Activated CD4-positive, alpha-beta memory T cell treated with anti-CD3 and anti-CD28 coated beads, Interleukin-2, amount 10 ng/mL, durations not matched to agents 7 days and 5 days (primary cell): ENCODE measurements at regions of chr9 and their contacts with region 1.

Region 1: DNA sequence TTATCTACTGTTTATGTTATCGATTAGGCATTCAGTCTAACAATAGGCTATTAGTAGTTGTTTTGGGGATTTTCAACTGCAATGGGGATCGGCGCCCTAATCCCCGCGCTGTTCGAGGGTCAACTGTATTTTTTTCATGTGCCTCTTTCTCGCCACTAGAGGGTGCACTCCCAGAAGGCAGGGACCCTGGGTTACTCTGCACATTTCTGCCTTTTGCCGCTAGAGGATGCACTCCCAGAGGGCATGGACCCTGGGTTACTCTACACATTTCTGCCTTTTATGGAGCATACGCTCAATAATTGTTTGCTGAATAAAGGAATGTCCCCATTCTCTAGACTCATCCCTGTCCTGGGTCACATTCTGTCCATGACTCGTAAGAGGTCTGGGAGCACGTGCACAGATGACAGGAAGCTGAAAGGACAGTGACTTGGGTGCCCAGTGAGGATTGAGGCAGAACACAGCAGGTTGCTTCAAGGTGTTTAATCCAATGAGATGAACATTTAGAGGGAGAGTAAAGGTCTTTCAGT is 27.9 kb upstream of the RECK start:
- DNase-seq: peak; percentile 70
- H3K4me3 Mint-ChIP-seq: no peak overlapping the region
- H3K27ac Mint-ChIP-seq: no peak overlapping the region
- H3K4me1 Mint-ChIP-seq: peaks cover 20% of the 10 kb centered on the region
- H3K27me3 Mint-ChIP-seq: peaks cover 46% of the 10 kb centered on the region

Region 2: DNA sequence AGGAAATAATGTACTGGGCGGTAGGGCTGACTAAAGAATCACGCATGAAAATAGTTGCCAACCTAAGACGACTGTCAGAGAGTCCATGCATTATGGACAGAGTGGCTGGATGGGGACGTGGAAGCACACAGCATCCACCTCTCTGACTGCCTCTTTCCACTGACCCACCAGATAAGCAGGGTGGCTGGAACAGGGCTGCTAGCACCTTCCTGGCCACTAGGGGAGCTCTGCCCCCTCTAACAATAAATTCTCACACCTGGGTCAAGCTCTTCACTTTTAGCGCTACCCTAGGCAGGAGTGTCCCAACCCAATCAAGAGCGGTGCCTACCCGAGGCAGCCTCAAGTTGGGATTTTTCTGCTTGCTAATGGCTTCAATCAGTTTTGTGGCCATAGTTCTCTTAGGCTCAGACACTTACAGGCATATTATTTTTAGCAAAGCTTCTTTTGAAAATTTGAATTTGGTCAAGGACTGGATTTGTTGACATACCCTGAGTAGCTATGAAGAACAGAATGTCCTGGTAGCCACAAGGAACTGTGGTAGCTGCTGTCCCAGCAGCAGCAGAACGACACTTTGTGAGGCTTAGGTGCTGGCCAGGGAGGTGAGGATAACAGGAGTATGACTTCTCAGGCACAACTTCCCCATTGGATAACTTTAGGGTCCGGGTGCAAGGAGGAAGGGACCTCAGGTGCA is 312.2 kb before region 1 on chr9:
- CTCF ChIA-PET with region 1: no interaction called
- POLR2A ChIA-PET with region 1: no interaction called
- DNase-seq: peak; percentile 60
- H3K4me3 Mint-ChIP-seq: no peak overlapping the region
- H3K27ac Mint-ChIP-seq: no peak overlapping the region
- H3K4me1 Mint-ChIP-seq: peaks cover 4% of the 10 kb centered on the region
- H3K27me3 Mint-ChIP-seq: no peaks in the 10 kb centered on the region

Region 3: DNA sequence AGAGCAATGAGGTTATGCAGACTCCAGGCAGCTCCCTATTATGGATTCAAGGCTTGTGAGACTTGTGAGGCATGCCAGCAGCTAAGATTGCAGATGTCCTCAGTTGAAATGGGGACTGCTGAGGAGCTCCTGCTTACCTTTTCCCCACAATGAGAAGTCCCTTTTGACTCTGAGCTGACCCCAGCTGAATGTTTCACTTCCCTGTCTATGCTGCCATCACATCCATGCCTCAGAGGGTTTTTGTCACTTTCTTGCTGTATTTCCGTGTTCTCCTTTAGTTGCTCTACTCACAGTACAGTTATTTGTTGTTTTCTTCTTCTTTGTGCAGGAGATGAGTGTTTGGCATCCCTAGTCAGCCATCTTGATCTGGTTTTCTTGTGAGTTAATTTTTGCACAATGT is 32.1 kb before region 1 on chr9:
- CTCF ChIA-PET with region 1: no interaction called
- POLR2A ChIA-PET with region 1: no interaction called
- DNase-seq: no peak
- H3K4me3 Mint-ChIP-seq: no peak overlapping the region
- H3K27ac Mint-ChIP-seq: no peak overlapping the region
- H3K4me1 Mint-ChIP-seq: peaks cover 4% of the 10 kb centered on the region
- H3K27me3 Mint-ChIP-seq: peaks cover 81% of the 10 kb centered on the region

Region 4: GRCh38 chr9:35996358-35996975 is 12.4 kb before region 1 on chr9:
- CTCF ChIA-PET with region 1: interaction called, 15 read pairs
- POLR2A ChIA-PET with region 1: no interaction called
- DNase-seq: no peak
- H3K4me3 Mint-ChIP-seq: no peak overlapping the region
- H3K27ac Mint-ChIP-seq: no peak overlapping the region
- H3K4me1 Mint-ChIP-seq: no peaks in the 10 kb centered on the region
- H3K27me3 Mint-ChIP-seq: peaks cover 38% of the 10 kb centered on the region

Region 5: DNA sequence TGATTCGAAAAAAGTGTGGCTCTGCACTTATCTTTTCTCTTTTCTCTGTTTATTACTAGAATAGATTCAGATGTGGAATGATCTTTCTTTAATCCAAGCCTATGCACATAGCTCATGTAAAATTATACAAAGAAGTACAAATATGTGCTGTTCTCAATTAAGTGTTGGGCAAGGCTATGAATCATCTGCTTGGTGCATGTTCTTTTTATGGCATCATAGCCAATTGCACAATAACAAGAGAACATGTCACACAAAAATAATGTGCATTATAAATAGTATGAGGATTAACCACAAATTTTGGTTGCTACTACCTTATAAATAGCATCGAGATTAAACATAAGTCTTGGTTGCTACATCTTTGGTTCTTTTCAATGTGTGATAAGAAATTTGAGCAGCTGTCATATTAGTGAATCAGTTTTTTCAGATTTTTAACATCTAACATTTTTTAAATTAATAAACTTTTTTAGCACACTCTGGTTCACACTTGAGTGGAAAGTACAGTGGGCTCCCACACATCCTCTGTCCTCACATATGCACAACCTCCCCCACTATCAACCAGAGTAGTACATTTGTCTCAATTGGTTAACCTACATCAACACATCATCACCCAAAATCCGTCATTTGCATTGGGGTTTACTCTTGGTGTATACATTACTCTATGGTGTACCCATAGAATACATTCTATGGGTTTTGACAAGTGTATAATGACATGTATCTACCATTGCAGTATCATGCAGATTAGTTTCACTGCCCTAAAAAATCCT is 21.1 kb after region 1 on chr9:
- CTCF ChIA-PET with region 1: interaction called, 94 read pairs
- POLR2A ChIA-PET with region 1: no interaction called
- DNase-seq: no peak
- H3K4me3 Mint-ChIP-seq: no peak overlapping the region
- H3K27ac Mint-ChIP-seq: no peak overlapping the region
- H3K4me1 Mint-ChIP-seq: no peaks in the 10 kb centered on the region
- H3K27me3 Mint-ChIP-seq: peaks cover 34% of the 10 kb centered on the region

Region 6: DNA sequence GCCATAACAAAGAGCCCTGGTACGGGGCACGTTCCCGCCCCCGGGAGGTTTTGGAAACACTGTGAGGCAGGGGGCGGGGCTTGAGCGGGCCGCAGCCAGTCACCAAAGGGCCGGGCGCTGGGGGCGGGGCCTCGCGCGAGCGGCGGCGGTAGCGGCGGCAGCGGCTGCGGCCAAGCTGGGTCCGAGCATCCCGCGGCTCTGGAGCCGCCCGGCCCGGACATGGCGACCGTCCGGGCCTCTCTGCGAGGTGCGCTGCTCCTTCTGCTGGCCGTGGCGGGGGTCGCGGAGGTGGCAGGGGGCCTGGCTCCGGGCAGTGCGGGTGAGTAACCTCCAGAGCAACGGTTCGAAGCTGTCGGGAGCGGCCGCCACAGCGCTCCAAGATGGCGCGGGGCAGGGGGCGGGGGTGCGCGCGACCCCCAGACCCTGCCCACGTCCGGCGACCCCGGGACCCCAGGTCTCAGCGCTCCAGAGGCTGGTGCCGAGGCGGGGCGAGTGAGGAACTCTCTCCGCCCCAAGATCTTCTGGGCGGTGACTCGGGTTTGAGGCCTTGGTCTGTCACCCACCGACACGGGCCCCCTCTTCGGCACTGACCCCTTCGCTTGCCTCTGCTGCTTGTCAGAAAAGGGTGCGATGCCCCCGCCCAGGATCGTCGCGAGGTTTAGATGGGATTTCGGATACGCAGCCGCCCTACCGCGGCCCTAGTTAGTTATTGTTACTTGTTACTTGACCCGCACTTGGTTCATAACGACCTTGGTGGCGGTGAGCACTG is 28.1 kb after region 1 on chr9 and contains the start of gene RECK:
- CTCF ChIA-PET with region 1: interaction called, 10 read pairs
- POLR2A ChIA-PET with region 1: no interaction called
- DNase-seq: peak; percentile 87
- H3K4me3 Mint-ChIP-seq: peak within 1 kb of the TSS; percentile 90
- H3K27ac Mint-ChIP-seq: peak within 1 kb of the TSS; percentile 45
- H3K4me1 Mint-ChIP-seq: peaks cover 37% of the 10 kb centered on the region
- H3K27me3 Mint-ChIP-seq: peaks cover 11% of the 10 kb centered on the region
- total RNA-seq, gene RECK: 7.4 to 8.1 TPM